A673 (cell line): ENCODE measurements at regions of chr12 and their contacts with region 1.

Region 1: DNA sequence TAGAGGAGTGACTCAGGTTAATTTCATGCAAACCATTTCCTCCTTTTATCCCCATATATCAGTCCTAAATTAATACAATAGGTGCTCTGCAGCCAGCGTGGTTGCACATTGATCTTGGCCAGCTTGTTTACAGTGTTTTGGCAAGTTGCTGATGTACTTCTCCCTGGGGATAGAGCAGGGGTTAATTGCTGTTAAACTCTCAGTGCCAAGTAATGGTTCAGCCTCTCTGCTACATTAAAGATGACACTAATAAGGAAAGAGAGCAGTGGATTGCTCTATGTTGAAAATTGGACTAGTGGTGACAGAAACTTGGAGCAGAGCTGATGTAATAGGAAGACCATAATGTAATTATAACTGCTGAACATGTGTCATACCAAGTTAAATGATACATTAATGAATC is 717.5 kb downstream of the RERGL start:
- DNase-seq: peak; percentile 94
- H3K4me3 ChIP-seq: no peak overlapping the region
- H3K27ac ChIP-seq: peak overlapping the region; percentile 97
- H3K4me1 ChIP-seq: peaks cover 44% of the 10 kb centered on the region
- H3K27me3 ChIP-seq: no peaks in the 10 kb centered on the region
- CTCF ChIP-seq: no peak

Region 2: DNA sequence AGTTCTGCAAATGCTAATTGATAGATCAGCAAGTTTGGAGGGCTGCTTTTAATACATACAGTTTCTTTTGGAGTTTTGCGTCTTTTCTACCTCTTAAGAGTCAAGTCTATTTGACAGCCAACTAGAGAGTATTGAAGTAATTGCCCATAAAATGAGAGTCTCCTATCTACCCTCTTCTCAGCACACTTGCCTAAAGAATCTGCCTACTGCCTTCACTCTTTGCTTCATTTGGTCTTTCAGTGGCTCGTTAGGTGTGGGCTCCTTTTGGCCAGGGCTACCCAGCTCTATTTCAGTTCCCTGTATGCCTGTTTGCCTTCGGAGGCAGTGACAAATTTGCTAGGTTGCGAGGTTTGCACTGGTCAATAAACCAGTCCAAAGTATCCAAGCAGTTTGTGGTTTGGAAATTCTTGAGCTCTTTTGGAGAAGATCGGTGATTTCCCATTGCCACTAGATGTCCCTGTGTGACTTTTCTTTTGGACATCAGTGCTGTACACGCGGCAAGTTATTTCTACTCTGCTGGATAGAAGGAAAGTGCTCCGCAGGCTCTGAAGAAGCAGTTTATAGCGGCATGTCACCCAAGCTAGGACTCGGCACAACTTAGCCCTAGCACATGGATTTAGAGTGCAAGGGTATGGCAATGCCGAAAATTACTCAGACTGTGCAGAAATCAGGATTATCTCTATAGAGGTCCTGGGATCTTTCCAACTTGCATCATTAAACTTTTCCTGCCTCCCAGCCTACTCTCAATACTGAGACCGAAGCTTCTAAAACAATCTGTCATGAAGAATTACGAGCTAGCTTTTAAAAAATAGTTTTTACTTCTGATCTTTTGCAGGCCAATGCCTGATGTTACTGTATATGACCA is 986.5 kb before region 1 on chr12:
- CTCF ChIA-PET with region 1: no interaction called
- POLR2A ChIA-PET with region 1: no interaction called
- intact Hi-C with region 1: loop called (anchors 5 kb)
- DNase-seq: peak; percentile 91
- H3K4me3 ChIP-seq: no peak overlapping the region
- H3K27ac ChIP-seq: peak overlapping the region; percentile 48
- H3K4me1 ChIP-seq: peaks cover 13% of the 10 kb centered on the region
- H3K27me3 ChIP-seq: no peaks in the 10 kb centered on the region
- CTCF ChIP-seq: peak; percentile 75

Region 3: DNA sequence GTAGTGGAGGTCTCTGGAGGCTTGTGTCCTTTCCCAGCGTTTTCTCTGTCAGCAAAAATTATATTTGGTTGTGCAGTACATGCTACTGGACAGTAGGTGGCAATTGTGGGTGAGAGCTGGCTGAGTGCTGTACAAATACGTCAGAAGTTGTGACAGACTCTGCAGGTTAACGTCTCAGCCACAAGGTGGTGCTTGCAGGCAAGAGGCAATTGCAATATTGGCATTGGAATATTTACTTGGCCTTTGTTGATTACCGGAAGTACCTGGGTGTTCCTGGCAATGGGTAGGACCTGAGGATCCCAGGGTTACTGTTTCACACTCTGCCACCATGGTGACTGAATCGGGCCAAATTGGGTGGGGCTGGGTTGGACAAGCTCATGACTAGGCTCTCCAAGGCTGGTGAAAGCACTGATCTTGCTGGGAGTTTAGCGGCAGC is 432.6 kb before region 1 on chr12:
- CTCF ChIA-PET with region 1: no interaction called
- POLR2A ChIA-PET with region 1: no interaction called
- intact Hi-C with region 1: loop called (anchors 2 kb)
- DNase-seq: peak; percentile 90
- H3K4me3 ChIP-seq: no peak overlapping the region
- H3K27ac ChIP-seq: peak overlapping the region; percentile 8
- H3K4me1 ChIP-seq: no peaks in the 10 kb centered on the region
- H3K27me3 ChIP-seq: no peaks in the 10 kb centered on the region
- CTCF ChIP-seq: peak; percentile 92

Region 4: DNA sequence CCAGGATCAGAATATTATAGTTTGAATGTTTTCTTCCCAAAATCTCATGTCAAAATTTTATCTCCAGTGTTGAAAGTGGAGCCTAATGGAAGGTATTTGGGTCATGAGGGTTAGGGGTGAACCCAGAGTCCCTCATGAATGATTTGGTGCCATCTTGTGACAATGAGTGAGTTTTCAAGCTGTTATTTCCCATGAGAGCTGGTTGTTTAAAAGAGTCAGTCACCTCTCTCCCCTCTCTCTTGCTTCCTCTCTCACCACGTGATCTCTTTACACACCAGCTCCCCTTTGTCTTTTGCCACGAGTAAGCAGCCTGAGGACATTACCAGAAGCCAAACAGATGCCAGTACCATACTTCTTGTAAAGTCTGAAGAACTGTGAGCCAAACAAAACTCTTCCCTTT is 155.9 kb after region 1 on chr12:
- CTCF ChIA-PET with region 1: no interaction called
- POLR2A ChIA-PET with region 1: no interaction called
- intact Hi-C with region 1: loop called (anchors 5 kb)
- DNase-seq: peak; percentile 46
- H3K4me3 ChIP-seq: no peak overlapping the region
- H3K27ac ChIP-seq: no peak overlapping the region
- H3K4me1 ChIP-seq: peaks cover 9% of the 10 kb centered on the region
- H3K27me3 ChIP-seq: no peaks in the 10 kb centered on the region
- CTCF ChIP-seq: peak; percentile 37

Region 5: DNA sequence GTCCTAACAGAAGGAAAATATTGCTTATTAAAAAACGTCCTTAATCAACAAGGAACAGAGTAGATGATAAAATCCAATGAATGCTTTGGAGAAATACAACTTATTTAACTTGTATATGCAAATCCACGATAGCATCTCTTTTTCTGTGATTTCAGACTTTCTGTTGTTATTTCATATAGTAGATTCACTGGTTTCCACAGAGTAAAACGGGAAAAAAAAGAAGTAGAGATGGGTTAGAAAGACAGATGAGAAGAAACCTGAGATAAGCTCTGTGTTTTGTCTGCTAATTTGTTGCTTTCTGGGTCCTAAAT is 269.8 kb after region 1 on chr12:
- CTCF ChIA-PET with region 1: no interaction called
- POLR2A ChIA-PET with region 1: interaction called, 3 read pairs
- intact Hi-C with region 1: loop called (anchors 5 kb)
- DNase-seq: no peak
- H3K4me3 ChIP-seq: peak overlapping the region; percentile 26
- H3K27ac ChIP-seq: peak overlapping the region; percentile 7
- H3K4me1 ChIP-seq: peaks cover 14% of the 10 kb centered on the region
- H3K27me3 ChIP-seq: no peaks in the 10 kb centered on the region
- CTCF ChIP-seq: no peak; the same call in 1 of the 2 replicates